Gastrocnemius medialis (tissue), 4 donors: ENCODE measurements at regions of chr21 and their contacts with region 1.

Region 1: DNA sequence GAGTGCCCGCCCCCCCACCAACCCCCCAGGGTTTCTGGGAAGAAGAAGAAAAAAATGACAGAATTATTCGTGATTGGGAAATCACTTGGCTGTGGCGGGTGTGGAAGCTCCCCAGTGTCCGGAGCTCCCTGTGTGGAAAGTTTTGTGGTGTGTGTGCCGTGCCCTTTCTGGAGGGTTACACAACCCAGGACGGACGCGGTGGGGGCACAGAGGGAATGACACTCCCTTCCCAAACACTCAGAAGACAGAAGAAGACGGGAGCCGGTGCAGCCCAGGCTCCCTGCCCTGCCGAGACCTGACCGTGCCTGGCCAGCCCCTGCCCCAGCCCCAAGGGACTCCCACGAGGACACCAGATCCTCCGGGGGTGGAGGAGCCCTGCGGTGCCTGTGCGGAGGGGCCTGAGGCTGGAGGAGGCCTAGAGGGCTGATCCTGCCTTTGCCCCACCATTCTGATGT is 33.0 kb upstream of the ADARB1 start:
- DNase-seq: peak; percentile 73 to 93
- ATAC-seq: peak; percentile 78 to 79
- H3K4me3 ChIP-seq: peak overlapping the region in 3 of 4 donors; percentile 1 to 46 (median 9)
- H3K27ac ChIP-seq: peak overlapping the region; percentile 48 to 75 (median 68)
- H3K4me1 ChIP-seq: peaks cover 11 to 13% of the 10 kb centered on the region in 2 donors
- H3K27me3 ChIP-seq: no peaks in the 10 kb centered on the region
- CTCF ChIP-seq: no peak
- POLR2A ChIP-seq: peak; percentile 60 to 77

Region 2: DNA sequence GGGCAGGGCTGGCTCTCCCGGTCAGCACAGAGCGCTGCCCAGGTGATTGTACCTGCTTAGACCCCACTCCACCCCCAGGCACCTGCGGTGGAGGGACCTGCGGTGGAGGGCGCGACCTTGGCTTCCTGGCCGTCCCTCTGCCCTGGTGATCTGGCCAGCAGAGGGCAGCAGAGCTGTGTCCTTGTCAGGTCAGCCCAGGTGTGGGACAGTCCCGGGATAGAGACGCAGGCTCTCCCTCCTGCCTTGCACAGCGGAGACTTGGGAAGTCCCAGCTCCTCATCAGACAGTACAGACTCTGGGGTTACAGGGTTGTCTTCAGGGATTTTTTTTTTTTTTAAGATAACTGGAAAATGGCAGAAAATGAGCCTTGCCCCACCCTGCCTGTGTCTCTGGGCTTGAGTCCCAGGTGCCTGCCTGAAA is 91.6 kb before region 1 on chr21:
- in situ Hi-C with region 1: loop called in 2 of 4 experiments (anchors 5 to 10 kb)
- intact Hi-C with region 1: no loop called
- DNase-seq: peak; percentile 82 to 94
- ATAC-seq: peak; percentile 40 to 53
- H3K4me3 ChIP-seq: no peak overlapping the region
- H3K27ac ChIP-seq: peak overlapping the region; percentile 47 to 96 (median 92)
- H3K4me1 ChIP-seq: peaks cover 63 to 64% of the 10 kb centered on the region in 2 donors
- H3K27me3 ChIP-seq: no peaks in the 10 kb centered on the region
- CTCF ChIP-seq: peak; percentile 90 to 98 (median 96)
- POLR2A ChIP-seq: peak in 1 of 2 donors; percentile 8

Region 3: DNA sequence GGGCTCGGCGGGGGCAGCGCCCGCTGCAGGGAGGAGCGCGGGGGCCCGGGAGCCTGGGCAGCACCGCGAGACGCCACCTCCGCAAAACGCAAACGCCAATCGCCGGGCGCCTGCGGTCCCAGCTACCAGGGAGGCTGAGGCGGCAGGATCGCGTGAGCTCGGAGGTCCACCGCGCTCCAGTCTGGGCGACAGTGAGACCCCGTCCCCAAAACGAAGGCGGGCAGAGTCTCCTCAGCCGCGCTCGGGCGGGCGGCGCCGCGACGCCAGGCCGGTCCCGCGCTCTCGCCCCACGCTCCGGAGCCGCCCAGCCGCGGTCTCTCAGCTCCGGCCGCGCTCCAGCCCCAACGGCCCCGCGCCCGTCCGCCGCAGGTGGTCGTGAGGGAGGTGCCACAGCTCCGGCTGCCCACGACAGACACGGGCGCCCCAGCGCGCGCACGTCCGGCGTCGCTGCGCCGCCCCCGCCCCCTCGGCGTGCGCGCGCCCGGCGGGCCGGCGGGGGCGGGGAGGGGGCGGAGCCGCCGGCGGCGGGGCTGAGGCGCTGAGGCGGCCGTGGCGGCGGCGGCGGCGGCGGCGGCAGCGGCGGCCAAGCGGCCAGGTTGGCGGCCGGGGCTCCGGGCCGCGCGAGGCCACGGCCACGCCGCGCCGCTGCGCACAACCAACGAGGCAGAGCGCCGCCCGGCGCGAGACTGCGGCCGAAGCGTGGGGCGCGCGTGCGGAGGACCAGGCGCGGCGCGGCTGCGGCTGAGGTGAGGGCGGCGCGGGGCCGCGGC is 32.9 kb after region 1 on chr21 and contains the start of gene ADARB1:
- in situ Hi-C with region 1: no loop called
- intact Hi-C with region 1: loop called (anchors 2 kb)
- DNase-seq: peak in 1 of 2 donors; percentile 51
- ATAC-seq: peak; percentile 80 to 85
- H3K4me3 ChIP-seq: peak within 1 kb of the TSS; percentile 72 to 90 (median 80)
- H3K27ac ChIP-seq: peak within 1 kb of the TSS; percentile 84 to 95 (median 91)
- H3K4me1 ChIP-seq: peaks cover 33 to 40% of the 10 kb centered on the region in 2 donors
- H3K27me3 ChIP-seq: no peaks in the 10 kb centered on the region
- CTCF ChIP-seq: no peak
- POLR2A ChIP-seq: peak; percentile 89 to 90
- total RNA-seq, gene ADARB1: 5.9 to 11.5 (median 6.9) TPM

Region 4: DNA sequence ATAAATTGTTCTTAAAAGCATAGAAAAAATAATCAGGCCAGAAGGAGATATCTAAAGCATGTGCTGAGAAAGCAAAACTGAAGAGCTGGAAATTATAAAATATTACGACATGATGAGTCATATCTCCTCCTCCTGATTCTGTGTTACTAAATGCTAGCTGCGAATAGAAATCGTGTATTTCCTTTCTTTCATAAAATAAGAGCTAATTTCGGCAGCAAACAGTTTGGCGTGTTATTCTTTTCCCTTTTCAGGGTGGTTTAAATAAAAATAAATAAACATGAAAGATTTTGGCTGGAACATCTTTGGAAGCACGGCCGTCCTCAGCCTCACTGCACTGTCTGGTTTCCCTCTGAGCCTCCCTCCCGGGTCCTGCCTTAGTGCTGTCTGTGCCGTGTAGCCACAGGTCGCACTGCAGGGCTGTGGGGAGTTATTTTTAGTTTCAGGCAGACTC is 89.0 kb after region 1 on chr21:
- in situ Hi-C with region 1: loop called in 2 of 4 experiments (anchors 10 kb)
- intact Hi-C with region 1: loop called (anchors 1 kb)
- DNase-seq: no peak
- ATAC-seq: no peak
- H3K4me3 ChIP-seq: peak overlapping the region; percentile 2 to 24 (median 22)
- H3K27ac ChIP-seq: peak overlapping the region; percentile 68 to 79 (median 74)
- H3K4me1 ChIP-seq: peaks cover 66 to 71% of the 10 kb centered on the region in 2 donors
- H3K27me3 ChIP-seq: no peaks in the 10 kb centered on the region
- CTCF ChIP-seq: no peak
- POLR2A ChIP-seq: peak in 1 of 2 donors; percentile 50

Region 5: GRCh38 chr21:45294509-45295291 is 253.3 kb after region 1 on chr21:
- in situ Hi-C with region 1: no loop called
- intact Hi-C with region 1: no loop called
- DNase-seq: peak; percentile 53 to 63
- ATAC-seq: peak; percentile 51 to 58
- H3K4me3 ChIP-seq: peak overlapping the region in 1 of 4 donors; percentile 4
- H3K27ac ChIP-seq: peak overlapping the region; percentile 80 to 86 (median 83)
- H3K4me1 ChIP-seq: peaks cover 30 to 39% of the 10 kb centered on the region in 2 donors
- H3K27me3 ChIP-seq: peaks cover 9 to 22% (median 20%) of the 10 kb centered on the region in 3 donors
- CTCF ChIP-seq: no peak
- POLR2A ChIP-seq: peak; percentile 23 to 32